ENCODE measurements at regions of chr11 and their contacts with region 1.

Region 1: DNA sequence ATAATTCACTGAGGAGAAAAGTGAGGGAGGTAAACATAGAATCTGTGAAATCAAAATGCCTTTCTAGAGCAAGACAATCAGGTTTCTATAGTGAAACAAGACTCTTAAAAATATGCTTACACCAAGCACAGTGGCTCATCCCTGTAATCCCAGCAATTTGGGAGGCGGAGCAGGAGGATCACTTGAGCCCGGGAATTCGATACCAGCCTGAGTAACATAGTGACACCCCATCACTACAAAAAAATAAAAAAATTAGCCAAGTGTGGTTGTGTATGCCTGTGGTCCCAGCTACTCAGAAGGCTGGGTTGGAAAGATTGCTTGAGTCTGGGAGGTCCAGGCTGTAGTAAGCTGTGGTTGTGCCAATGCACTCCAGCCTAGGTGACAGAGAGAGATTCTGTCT is 43.2 kb upstream of the ME3 start:
- DNase-seq: no peak
- ATAC-seq: no peak
- H3K4me3 ChIP-seq: no peak overlapping the region
- H3K27ac ChIP-seq: no peak overlapping the region
- H3K4me1 ChIP-seq: peaks cover 7% of the 10 kb centered on the region
- H3K27me3 ChIP-seq: no peaks in the 10 kb centered on the region
- CTCF ChIP-seq: no peak
- POLR2A ChIP-seq: no peak
- RAD21 ChIP-seq: no peak

Region 2: DNA sequence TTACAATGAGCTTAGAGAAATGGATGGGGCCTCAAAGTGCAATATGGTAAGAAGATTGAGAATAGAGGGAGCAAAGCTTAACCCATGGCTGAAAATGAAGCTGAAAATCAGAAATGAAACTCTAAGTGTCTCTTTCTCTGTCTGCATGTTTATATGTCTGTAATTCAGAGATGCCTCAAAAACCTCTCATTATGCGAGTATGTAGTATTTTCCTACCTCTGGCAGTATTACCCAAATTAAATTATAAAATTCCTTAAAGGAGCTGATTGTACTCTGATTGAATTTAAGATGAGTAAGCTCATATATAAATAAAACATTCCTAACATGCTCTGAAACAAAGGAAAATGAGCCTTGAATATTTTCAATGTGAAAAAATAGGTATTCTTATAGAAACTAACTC is 45.0 kb after region 1 on chr11:
- CTCF ChIA-PET with region 1: no interaction called
- POLR2A ChIA-PET with region 1: no interaction called
- dilution Hi-C with region 1: no loop called
- in situ Hi-C with region 1: no loop called
- intact Hi-C with region 1: loop called (anchors 1 kb)
- DNase-seq: peak; percentile 44
- ATAC-seq: peak; percentile 65
- H3K4me3 ChIP-seq: no peak overlapping the region
- H3K27ac ChIP-seq: no peak overlapping the region
- H3K4me1 ChIP-seq: peaks cover 10% of the 10 kb centered on the region; the same call in 1 of the 2 replicates
- H3K27me3 ChIP-seq: no peaks in the 10 kb centered on the region
- CTCF ChIP-seq: no peak
- POLR2A ChIP-seq: no peak
- RAD21 ChIP-seq: no peak

Region 3: GRCh38 chr11:87437844-87438223 is 722.2 kb after region 1 on chr11:
- CTCF ChIA-PET with region 1: no interaction called
- POLR2A ChIA-PET with region 1: no interaction called
- dilution Hi-C with region 1: no loop called
- in situ Hi-C with region 1: no loop called
- intact Hi-C with region 1: no loop called
- DNase-seq: peak; percentile 84
- ATAC-seq: peak; percentile 54
- H3K4me3 ChIP-seq: no peak overlapping the region
- H3K27ac ChIP-seq: no peak overlapping the region
- H3K4me1 ChIP-seq: peaks cover 14% of the 10 kb centered on the region; the same call in 1 of the 2 replicates
- H3K27me3 ChIP-seq: no peaks in the 10 kb centered on the region
- CTCF ChIP-seq: no peak
- POLR2A ChIP-seq: no peak
- RAD21 ChIP-seq: no peak